OCI-LY7 (cell line): ENCODE measurements at regions of chrX and their contacts with region 1.

Region 1: DNA sequence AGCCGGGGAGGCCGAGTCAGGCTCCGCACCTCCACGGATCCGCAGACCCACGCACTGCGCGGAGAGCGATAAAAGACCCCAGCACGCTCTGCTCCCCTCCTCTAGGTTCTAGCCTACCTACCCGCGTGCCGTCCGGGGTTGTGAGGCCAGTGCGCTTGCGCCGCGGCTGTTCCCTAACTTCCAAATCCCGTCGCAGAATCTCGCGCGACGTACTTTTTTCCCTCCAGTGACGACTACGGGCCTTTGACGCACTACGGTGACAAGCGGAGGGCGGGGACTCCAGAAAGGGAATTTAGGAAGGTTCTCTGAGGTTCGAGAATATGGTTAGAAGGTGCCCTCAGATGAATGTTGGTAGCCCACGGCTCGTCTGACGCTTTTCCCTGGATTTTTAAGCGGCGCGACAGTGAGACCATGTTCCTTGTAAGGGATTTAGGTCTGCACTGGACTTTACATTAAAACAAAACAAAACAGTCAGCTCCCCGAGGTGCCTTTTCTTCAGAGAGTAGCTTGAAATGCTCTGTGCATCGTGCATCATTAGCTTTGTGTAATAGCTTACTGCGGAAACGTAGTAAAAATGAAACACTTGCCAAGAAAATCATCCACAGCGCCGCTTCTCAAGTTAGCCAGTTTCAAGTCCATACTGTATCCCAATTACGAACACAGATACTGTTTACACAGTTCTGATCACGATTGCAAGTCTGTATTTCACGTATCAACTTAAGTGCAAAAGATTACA is at the start of gene NKRF:
- DNase-seq: peak; percentile 90
- H3K4me3 ChIP-seq: peak within 1 kb of the TSS; percentile 90
- H3K27ac ChIP-seq: peak within 1 kb of the TSS; percentile 68
- H3K4me1 ChIP-seq: peaks cover 24% of the 10 kb centered on the region
- CTCF ChIP-seq: no peak
- total RNA-seq, gene NKRF: 10.7 and 11.9 TPM in 2 replicates

Region 2: DNA sequence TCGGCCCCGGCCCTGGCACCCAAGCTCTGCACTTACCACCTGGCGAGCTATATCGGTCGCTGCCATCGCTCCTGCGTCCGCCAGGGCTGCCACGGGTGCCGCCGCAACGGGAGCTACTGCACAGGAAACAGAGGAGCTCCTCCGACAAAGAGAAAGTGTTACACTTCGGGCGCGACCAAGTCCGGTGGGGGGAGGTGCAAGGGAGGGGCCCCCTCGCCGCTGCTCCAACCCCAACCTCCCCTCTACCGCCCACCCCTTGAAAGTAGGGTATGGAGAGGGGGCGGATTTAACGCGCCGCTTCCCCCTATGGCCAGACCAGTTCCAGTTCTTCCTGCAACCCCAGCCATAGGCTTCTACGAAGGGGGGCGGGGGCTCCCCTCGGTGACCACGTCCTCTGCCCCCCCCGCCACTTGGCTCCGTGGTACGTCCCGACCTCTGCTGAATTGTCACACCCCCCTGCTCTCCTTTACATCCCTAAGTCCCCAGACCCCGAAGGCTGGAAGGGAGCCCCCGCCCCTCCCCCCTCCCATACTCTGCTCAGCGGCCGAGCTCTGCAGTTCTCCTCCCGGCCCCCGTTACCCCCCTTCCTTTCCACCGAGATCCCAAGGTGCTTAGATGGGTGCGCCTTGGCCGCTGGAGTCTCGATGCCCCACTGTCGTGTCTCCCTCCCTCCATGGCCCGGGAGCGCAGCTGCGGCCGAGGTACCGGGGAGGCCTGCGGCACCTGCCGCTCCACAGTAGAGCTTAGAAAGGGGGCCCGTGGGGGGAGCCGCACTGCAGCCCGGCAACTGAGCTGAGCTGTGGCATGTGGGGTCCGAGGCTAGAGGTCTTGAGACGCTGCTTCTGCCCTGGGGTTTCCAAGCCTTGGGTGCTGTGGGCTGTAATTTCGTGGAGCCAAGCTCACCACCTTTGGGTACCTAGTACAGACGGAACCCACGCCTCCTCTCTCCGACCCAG is 86.9 kb after region 1 on chrX and contains the start of gene SEPTIN6:
- CTCF ChIA-PET with region 1: interaction called, 20 read pairs
- POLR2A ChIA-PET with region 1: interaction called, 4 read pairs
- intact Hi-C with region 1: loop called (anchors 5 kb)
- DNase-seq: peak; percentile 90
- H3K4me3 ChIP-seq: peak within 1 kb of the TSS; percentile 94
- H3K27ac ChIP-seq: peak within 1 kb of the TSS; percentile 73
- H3K4me1 ChIP-seq: peaks cover 66% of the 10 kb centered on the region
- CTCF ChIP-seq: no peak
- total RNA-seq, gene SEPTIN6: 145 and 182 TPM in 2 replicates

Region 3: DNA sequence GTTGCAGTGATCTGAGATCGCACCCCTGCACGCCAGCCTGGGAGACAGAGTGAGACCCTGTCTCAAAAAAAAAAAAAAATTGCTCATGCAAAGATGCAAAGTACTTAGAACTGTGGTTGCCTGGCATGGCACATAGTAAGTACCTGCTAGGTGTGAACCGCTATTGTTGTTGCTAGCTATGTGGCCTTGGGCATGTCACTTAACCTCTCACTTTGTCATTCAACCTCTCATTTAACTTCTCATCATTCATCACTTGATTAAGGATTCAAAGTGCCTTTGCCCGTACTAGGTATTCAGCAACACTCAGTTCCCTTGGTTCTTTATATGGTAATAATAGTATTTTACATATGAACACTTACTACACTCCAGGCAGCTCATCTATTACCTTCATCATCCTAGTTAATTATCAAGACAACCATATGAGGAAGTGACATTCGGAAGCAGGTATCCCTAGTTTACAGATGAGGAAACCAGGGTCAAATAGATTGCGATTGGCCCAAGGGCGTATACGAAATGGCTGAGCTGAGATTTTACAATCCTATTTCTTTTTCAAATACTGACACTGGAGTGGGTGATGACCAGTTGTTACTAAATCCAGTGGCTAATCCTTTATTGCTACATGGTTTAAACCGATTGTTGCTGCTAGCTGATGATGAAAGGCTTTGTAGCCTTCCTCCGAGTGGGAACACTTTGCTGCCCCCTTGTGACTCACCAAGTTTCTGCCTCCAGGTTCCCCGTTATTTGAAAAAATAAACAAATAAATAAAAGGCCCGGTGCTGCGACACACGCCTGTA is 123.2 kb after region 1 on chrX:
- CTCF ChIA-PET with region 1: interaction called, 7 read pairs
- POLR2A ChIA-PET with region 1: interaction called, 6 read pairs
- intact Hi-C with region 1: loop called (anchors 2 kb)
- DNase-seq: peak; percentile 71
- H3K4me3 ChIP-seq: no peak overlapping the region
- H3K27ac ChIP-seq: no peak overlapping the region
- H3K4me1 ChIP-seq: peaks cover 14% of the 10 kb centered on the region
- CTCF ChIP-seq: peak; percentile 76

Region 4: GRCh38 chrX:119753571-119754257 is 147.3 kb after region 1 on chrX:
- CTCF ChIA-PET with region 1: interaction called, 5 read pairs
- POLR2A ChIA-PET with region 1: no interaction called
- intact Hi-C with region 1: loop called (anchors 10 kb)
- DNase-seq: peak; percentile 69
- H3K4me3 ChIP-seq: no peak overlapping the region
- H3K27ac ChIP-seq: no peak overlapping the region
- H3K4me1 ChIP-seq: peaks cover 49% of the 10 kb centered on the region
- CTCF ChIP-seq: peak; percentile 72

Region 5: DNA sequence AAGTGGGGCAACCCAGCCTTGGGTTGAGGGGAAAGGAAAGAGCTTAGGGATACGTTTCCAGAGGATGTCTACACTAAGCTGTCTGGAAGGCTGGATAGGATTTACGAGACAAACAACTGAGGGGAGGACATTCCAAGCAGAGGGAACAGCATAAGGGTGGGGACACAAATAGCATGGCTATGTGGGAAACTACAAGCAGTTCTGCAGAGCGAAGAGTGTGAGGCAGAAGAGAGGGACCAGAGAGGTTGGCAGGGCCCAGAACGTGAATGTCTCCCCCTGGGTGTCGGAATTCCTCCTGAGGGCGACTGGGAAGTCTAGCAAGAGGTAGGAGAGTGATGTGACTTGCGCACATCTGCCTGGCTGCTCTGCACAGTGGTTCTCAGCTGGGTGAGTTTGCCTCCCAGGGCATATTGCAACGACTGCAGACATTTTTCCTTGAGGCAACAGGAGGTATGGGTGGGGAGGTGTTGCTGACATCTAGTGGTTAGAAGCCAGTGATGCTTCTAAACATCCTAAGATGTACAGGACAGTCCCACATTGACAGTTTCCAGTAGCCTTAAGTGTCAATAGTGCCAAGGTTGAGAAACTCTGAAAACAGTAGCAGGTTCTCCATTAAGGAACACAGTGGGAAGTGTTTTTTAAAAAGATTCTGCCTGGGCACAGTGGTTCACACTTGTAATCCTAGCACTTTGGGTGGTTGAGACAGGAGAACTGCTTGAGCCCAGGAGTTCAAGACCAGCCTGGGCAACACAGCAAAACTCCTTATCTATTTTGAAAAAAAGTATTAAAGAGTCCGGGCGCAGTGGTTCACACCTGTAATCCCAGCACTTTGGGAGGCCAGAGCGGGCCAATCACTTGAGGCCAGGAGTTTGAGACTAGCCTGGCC is 274.3 kb after region 1 on chrX:
- CTCF ChIA-PET with region 1: interaction called, 11 read pairs
- POLR2A ChIA-PET with region 1: no interaction called
- intact Hi-C with region 1: no loop called
- DNase-seq: peak; percentile 76
- H3K4me3 ChIP-seq: no peak overlapping the region
- H3K27ac ChIP-seq: peak overlapping the region; percentile 37
- H3K4me1 ChIP-seq: peaks cover 15% of the 10 kb centered on the region
- CTCF ChIP-seq: peak; percentile 77